HEK293 (cell line): ENCODE measurements at regions of chr18 and their contacts with region 1.

Region 1: DNA sequence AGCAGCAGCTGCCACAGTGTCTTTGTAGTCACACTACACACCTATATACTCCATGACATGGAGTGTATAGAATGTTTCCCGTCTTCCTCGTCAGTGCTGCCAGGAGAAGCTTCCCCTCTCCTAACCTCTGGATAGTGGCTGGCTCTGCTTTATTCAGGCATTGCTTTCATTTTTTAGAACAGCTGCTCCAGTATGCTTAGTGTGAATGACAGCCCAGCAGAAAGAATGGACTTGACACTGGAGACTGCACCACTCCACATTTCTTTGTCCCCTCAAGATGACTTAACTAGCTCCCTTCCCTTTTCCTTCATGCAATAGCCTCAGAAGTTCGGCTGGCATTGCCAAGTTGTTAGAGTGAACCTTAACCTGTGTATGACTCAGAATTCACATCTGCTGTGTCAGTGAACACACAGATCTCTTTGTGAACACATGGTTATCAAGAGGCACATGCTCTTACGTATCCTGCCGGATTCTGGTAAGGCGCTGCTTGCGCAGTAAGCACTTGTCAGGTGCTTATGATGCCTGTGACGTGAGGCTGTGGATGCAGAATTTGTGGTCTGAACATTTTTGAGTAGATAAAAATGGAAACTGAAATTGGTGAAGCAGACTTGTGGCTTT is 73.9 kb downstream of the NEDD4L start:
- H3K4me3 ChIP-seq: no peak overlapping the region
- H3K27ac ChIP-seq: no peak overlapping the region
- H3K4me1 ChIP-seq: 0 out of 2 replicates have a peak, but pooled peaks cover 2% of the 10 kb centered on the region
- CTCF ChIP-seq: no peak

Region 2: GRCh38 chr18:57881818-57882413 is 236.0 kb before region 1 on chr18:
- CTCF ChIA-PET with region 1: interaction called, 38 read pairs
- POLR2A ChIA-PET with region 1: no interaction called
- H3K4me3 ChIP-seq: no peak overlapping the region
- H3K27ac ChIP-seq: no peak overlapping the region
- H3K4me1 ChIP-seq: no peaks in the 10 kb centered on the region
- CTCF ChIP-seq: peak; percentile 88

Region 3: GRCh38 chr18:57959278-57959677 is 158.6 kb before region 1 on chr18:
- CTCF ChIA-PET with region 1: interaction called, 24 read pairs
- POLR2A ChIA-PET with region 1: no interaction called
- H3K4me3 ChIP-seq: no peak overlapping the region
- H3K27ac ChIP-seq: no peak overlapping the region
- H3K4me1 ChIP-seq: peaks cover 8% of the 10 kb centered on the region; the same call in 1 of the 2 replicates
- CTCF ChIP-seq: no peak

Region 4: DNA sequence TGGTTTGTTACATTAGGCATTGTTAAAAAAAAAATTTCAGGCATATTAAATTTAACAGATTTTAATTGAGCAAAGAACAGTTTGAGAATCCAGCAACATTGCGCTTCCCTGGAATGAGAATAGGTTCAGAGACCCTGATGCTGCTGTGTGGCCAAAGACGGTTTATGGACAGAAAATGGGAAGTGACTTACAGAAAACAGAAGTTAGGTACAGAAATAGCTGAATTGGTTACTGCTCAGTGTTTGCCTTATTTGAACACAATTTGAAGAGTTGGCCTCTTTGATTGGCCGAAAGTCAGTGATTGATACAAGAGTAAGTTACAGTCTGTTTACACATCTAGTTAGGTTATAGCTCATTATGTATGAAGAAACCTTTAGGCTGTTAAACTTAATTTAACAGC is 79.8 kb before region 1 on chr18:
- CTCF ChIA-PET with region 1: interaction called, 100 read pairs
- POLR2A ChIA-PET with region 1: interaction called, 3 read pairs
- H3K4me3 ChIP-seq: no peak overlapping the region
- H3K27ac ChIP-seq: no peak overlapping the region
- H3K4me1 ChIP-seq: peaks cover 7% of the 10 kb centered on the region
- CTCF ChIP-seq: no peak

Region 5: DNA sequence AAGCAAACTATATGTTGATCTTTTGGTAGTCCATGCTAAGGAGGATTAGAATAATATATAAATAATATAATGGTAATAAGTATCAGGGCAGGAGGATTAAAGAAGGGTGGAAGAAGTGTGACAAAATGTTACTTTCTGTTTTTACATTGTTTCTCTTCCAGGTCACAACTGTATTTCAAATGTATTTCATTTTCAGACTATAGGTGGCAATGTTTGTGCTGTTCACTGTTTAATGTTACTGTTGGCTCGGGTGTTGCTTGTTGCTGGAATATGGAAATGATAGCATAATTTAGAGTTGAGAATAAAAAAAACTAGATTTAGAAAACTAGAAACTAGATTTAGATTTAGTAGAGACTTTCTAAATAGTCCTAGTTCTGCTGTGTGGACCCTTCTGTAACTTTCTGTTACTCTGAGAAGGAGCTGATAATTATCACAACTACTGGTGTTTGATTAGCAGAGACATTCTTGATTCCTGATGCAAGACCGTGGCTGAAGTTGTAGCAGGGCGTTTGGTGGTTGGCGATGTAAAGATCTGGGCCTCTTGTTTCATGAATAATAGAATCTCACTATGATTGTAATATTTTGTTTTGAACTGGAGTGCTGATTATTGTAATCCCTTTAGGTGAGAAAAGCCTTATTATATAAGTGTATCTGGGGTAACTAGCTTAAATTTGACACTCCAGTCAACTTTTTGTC is 66.0 kb before region 1 on chr18:
- CTCF ChIA-PET with region 1: interaction called, 58 read pairs
- POLR2A ChIA-PET with region 1: interaction called, 3 read pairs
- H3K4me3 ChIP-seq: no peak overlapping the region
- H3K27ac ChIP-seq: no peak overlapping the region
- H3K4me1 ChIP-seq: peaks cover 2% of the 10 kb centered on the region; the same call in 1 of the 2 replicates
- CTCF ChIP-seq: peak; percentile 28; the same call in 1 of the 2 replicates

Region 6: GRCh38 chr18:58057291-58057965 is 60.5 kb before region 1 on chr18:
- CTCF ChIA-PET with region 1: interaction called, 58 read pairs
- POLR2A ChIA-PET with region 1: interaction called, 3 read pairs
- H3K4me3 ChIP-seq: no peak overlapping the region
- H3K27ac ChIP-seq: no peak overlapping the region
- H3K4me1 ChIP-seq: peaks cover 4% of the 10 kb centered on the region; the same call in 1 of the 2 replicates
- CTCF ChIP-seq: no peak